ENCODE measurements at regions of chr16 and their contacts with region 1.

Region 1: GRCh38 chr16:86874141-86874540 is 295.8 kb downstream of the FOXL1 start:
- DNase-seq: peak; percentile 45
- H3K4me3 Mint-ChIP-seq: no peak overlapping the region
- H3K27ac Mint-ChIP-seq: no peak overlapping the region
- H3K4me1 Mint-ChIP-seq: no peaks in the 10 kb centered on the region
- H3K27me3 Mint-ChIP-seq: peaks cover 24% of the 10 kb centered on the region

Region 2: GRCh38 chr16:86508947-86509758 is 365.0 kb before region 1 on chr16:
- CTCF ChIA-PET with region 1: no interaction called
- DNase-seq: peak; percentile 39
- H3K4me3 Mint-ChIP-seq: peak overlapping the region; percentile 55
- H3K27ac Mint-ChIP-seq: peak overlapping the region; percentile 84
- H3K4me1 Mint-ChIP-seq: peaks cover 21% of the 10 kb centered on the region
- H3K27me3 Mint-ChIP-seq: peaks cover 98% of the 10 kb centered on the region

Region 3: DNA sequence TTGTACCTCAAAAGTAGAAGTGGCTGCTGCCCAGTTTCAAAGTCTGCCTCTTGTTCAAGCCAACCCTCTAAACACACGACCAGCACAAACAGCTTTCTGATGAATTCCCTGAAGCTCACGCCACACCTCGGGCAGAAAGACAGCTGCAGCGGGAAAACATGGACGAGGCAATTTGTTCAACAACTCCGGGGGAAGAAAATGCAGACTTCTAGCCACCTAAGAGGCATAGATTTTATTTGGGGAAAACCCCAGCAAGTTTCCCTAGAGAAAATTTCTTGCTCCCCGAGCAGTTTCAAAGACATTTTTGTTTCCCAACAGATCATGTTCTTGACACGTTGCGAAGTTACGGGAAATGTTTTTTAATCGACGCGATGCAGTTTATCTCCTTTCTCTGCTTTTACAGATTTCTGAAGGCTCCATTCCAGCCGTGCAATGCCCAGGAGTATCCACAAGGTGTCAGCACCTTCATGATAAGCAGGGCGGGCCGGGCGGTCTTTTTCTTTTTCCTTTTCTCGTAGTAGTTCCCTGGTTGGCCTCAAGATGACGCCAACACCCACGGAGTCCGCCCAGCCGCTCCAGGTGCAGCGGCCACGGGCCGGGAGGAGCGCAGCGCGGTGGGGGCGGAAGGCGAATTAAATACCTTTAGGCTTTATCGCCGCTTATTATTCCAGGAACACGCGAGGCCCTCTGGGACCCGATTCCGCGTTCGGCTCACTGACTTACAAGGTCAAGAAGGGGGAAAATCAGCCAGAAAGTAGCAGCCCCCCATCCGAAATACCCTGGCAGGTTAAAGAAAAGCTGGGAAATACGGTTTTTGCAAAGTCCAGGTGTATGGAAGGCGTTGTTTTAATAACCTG is 310.4 kb before region 1 on chr16:
- CTCF ChIA-PET with region 1: interaction called, 18 read pairs
- DNase-seq: peak; percentile 92
- H3K4me3 Mint-ChIP-seq: peak overlapping the region; percentile 21
- H3K27ac Mint-ChIP-seq: no peak overlapping the region
- H3K4me1 Mint-ChIP-seq: peaks cover 8% of the 10 kb centered on the region
- H3K27me3 Mint-ChIP-seq: peaks cover 71% of the 10 kb centered on the region

Region 4: DNA sequence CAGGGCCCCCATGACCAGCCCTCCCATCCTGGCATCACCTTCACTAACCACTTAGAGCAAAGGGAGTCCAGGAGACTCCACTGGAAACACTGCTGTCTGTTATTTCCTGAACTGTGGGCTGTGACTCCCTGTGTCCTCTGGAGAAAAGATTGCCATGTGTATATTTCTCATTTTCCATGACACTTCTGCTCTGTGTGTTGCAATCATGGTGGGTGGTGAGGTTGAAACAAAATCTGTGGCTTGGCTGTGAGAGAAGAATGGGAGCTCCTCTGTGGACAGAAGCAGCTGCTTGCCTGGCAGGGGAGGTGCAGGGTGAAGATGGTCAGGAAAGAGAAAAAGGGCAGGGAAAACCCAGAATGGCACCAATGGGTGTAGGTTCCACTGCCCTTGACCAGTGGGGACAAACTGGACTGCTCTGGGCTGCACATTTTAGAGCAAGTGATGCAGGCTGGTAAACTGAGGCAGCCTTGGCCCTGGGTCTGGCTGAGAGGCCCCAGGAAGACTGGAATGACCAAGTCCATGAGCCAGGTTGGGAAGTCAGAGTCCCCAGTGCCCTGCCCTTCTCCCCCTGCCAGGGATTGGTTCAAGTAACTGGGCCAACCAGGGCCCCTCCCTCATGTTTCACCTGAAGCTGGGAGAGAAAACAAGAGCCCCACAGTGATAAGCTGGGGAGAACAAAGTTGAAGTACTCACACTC is 128.7 kb after region 1 on chr16:
- CTCF ChIA-PET with region 1: no interaction called
- DNase-seq: no peak
- H3K4me3 Mint-ChIP-seq: no peak overlapping the region
- H3K27ac Mint-ChIP-seq: no peak overlapping the region
- H3K4me1 Mint-ChIP-seq: no peaks in the 10 kb centered on the region
- H3K27me3 Mint-ChIP-seq: peaks cover 10% of the 10 kb centered on the region